ENCODE measurements at regions of chr10 and their contacts with region 1.

Region 1: GRCh38 chr10:7687228-7687907 is 15.7 kb upstream of the ITIH2 start:
- DNase-seq: peak; percentile 57 to 90 (median 66)
- ATAC-seq: peak; percentile 99
- H3K4me3 ChIP-seq: no peak overlapping the region
- H3K4me3 Mint-ChIP-seq: no peak overlapping the region
- H3K27ac ChIP-seq: no peak overlapping the region
- H3K27ac Mint-ChIP-seq: no peak overlapping the region
- H3K4me1 ChIP-seq: no peaks in the 10 kb centered on the region
- H3K4me1 Mint-ChIP-seq: peaks cover 5% of the 10 kb centered on the region
- H3K27me3 ChIP-seq: no peaks in the 10 kb centered on the region
- H3K27me3 Mint-ChIP-seq: peaks cover 7% of the 10 kb centered on the region
- CTCF ChIP-seq: peak; percentile 89

Region 2: GRCh38 chr10:6416892-6417512 is 1270.4 kb before region 1 on chr10:
- CTCF ChIA-PET with region 1: interaction called, 3 read pairs
- POLR2A ChIA-PET with region 1: no interaction called
- intact Hi-C with region 1: loop called in 1 of 2 experiments (anchors 2 kb)
- DNase-seq: peak in 4 of 14 experiments; percentile 22 to 76 (median 74)
- ATAC-seq: peak; percentile 76
- H3K4me3 ChIP-seq: no peak overlapping the region
- H3K4me3 Mint-ChIP-seq: no peak overlapping the region
- H3K27ac ChIP-seq: no peak overlapping the region
- H3K27ac Mint-ChIP-seq: no peak overlapping the region
- H3K4me1 ChIP-seq: no peaks in the 10 kb centered on the region
- H3K4me1 Mint-ChIP-seq: peaks cover 5% of the 10 kb centered on the region
- H3K27me3 ChIP-seq: no peaks in the 10 kb centered on the region
- H3K27me3 Mint-ChIP-seq: no peaks in the 10 kb centered on the region
- CTCF ChIP-seq: peak; percentile 86

Region 3: GRCh38 chr10:6920072-6921019 is 767.0 kb before region 1 on chr10:
- CTCF ChIA-PET with region 1: interaction called, 3 read pairs
- POLR2A ChIA-PET with region 1: no interaction called
- intact Hi-C with region 1: loop called (anchors 1 to 2 kb)
- DNase-seq: peak; percentile 61 to 87 (median 68)
- ATAC-seq: peak; percentile 100
- H3K4me3 ChIP-seq: no peak overlapping the region
- H3K4me3 Mint-ChIP-seq: no peak overlapping the region
- H3K27ac ChIP-seq: no peak overlapping the region
- H3K27ac Mint-ChIP-seq: no peak overlapping the region
- H3K4me1 ChIP-seq: peaks cover 8% of the 10 kb centered on the region
- H3K4me1 Mint-ChIP-seq: peaks cover 9% of the 10 kb centered on the region
- H3K27me3 ChIP-seq: no peaks in the 10 kb centered on the region
- H3K27me3 Mint-ChIP-seq: peaks cover 6% of the 10 kb centered on the region
- CTCF ChIP-seq: peak; percentile 70

Region 4: DNA sequence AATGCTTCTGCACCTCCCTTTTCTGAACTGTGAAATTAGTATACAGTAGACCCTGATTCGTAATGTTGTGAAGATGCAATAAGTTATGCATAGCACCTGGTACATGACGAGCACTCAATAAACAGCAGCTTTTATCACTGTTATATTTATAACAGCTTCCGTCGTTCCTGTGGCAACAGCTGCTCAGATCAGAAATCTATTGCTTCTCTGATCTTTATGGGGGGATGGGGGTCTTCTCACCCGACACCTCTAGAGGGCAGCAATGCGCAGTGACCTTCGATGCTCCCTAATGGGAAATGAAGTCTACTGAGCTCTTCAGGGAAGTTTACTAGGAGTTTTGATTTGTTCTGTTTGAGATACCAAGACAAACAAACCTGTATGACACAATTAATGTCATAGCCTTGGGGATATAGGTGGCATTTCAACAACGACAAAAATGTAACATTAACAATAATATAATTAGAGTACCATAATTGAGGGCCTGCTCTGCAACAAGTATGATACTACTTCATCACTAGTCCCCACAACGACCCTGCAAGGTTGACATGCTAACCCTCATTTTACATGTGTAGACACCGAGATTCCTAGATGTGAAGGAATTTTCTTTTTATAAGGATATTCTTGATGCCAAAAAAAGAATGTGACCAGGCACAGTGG is 566.1 kb before region 1 on chr10:
- CTCF ChIA-PET with region 1: no interaction called
- POLR2A ChIA-PET with region 1: no interaction called
- intact Hi-C with region 1: loop called in 1 of 2 experiments (anchors 10 kb)
- DNase-seq: peak; percentile 48 to 84 (median 61)
- ATAC-seq: peak; percentile 94
- H3K4me3 ChIP-seq: no peak overlapping the region
- H3K4me3 Mint-ChIP-seq: no peak overlapping the region
- H3K27ac ChIP-seq: no peak overlapping the region
- H3K27ac Mint-ChIP-seq: peak overlapping the region; percentile 65
- H3K4me1 ChIP-seq: peaks cover 7% of the 10 kb centered on the region
- H3K4me1 Mint-ChIP-seq: peaks cover 8% of the 10 kb centered on the region
- H3K27me3 ChIP-seq: no peaks in the 10 kb centered on the region
- H3K27me3 Mint-ChIP-seq: no peaks in the 10 kb centered on the region
- CTCF ChIP-seq: peak; percentile 82

Region 5: GRCh38 chr10:7260412-7260900 is 426.9 kb before region 1 on chr10:
- CTCF ChIA-PET with region 1: no interaction called
- POLR2A ChIA-PET with region 1: no interaction called
- intact Hi-C with region 1: loop called in 1 of 2 experiments (anchors 10 kb)
- DNase-seq: peak in 4 of 14 experiments; percentile 25 to 75 (median 68)
- ATAC-seq: peak; percentile 27
- H3K4me3 ChIP-seq: no peak overlapping the region
- H3K4me3 Mint-ChIP-seq: peak overlapping the region; percentile 30
- H3K27ac ChIP-seq: no peak overlapping the region
- H3K27ac Mint-ChIP-seq: peak overlapping the region; percentile 85
- H3K4me1 ChIP-seq: peaks cover 42% of the 10 kb centered on the region
- H3K4me1 Mint-ChIP-seq: peaks cover 59% of the 10 kb centered on the region
- H3K27me3 ChIP-seq: no peaks in the 10 kb centered on the region
- H3K27me3 Mint-ChIP-seq: no peaks in the 10 kb centered on the region
- CTCF ChIP-seq: peak; percentile 65

Region 6: DNA sequence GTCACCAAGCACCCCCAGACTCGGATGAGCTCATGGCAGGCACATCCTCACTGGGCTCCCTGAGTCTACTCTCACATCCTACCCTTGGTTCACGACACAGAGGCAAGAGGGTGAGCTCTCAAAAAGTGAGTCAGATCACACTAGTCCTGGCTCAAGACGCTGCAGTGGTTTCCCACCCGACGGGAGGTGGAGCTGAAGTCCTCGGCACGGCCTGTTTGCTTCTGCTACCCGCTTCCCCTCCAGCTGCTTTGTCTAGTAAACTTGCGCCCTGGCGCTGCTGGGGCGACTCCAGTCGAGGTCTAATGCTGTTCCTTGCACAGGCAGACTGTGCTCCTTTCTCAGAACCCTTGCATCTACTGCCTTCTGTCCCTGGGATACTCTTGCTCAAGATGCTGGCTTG is 263.1 kb before region 1 on chr10:
- CTCF ChIA-PET with region 1: interaction called, 4 read pairs
- POLR2A ChIA-PET with region 1: interaction called, 3 read pairs
- intact Hi-C with region 1: loop called (anchors 5 to 10 kb)
- DNase-seq: peak in 9 of 14 experiments; percentile 9 to 53 (median 24)
- ATAC-seq: peak; percentile 43
- H3K4me3 ChIP-seq: no peak overlapping the region
- H3K4me3 Mint-ChIP-seq: no peak overlapping the region
- H3K27ac ChIP-seq: no peak overlapping the region
- H3K27ac Mint-ChIP-seq: no peak overlapping the region
- H3K4me1 ChIP-seq: peaks cover 5% of the 10 kb centered on the region
- H3K4me1 Mint-ChIP-seq: peaks cover 22% of the 10 kb centered on the region
- H3K27me3 ChIP-seq: no peaks in the 10 kb centered on the region
- H3K27me3 Mint-ChIP-seq: no peaks in the 10 kb centered on the region
- CTCF ChIP-seq: no peak

Region 7: DNA sequence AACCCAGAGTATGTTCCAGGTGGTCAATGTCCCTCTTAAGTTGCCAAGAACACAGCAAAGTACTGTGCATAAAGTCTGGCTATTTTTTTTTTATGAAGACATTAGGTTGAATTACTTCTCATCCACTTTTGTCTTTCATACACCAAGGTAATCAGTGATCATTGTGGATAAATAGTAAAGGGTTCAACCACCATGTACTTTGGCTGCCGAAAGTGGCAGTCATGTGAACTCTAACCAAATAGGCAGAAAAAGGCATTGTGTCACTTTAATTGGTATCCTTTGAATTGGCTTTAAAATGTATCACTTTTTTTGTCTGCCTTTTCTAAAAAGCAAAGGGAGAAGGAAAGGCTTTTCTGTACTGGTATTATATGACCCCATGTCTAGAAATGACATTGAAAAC is 23.1 kb after region 1 on chr10:
- CTCF ChIA-PET with region 1: no interaction called
- POLR2A ChIA-PET with region 1: no interaction called
- intact Hi-C with region 1: no loop called
- DNase-seq: no peak
- ATAC-seq: no peak
- H3K4me3 ChIP-seq: no peak overlapping the region
- H3K4me3 Mint-ChIP-seq: no peak overlapping the region
- H3K27ac ChIP-seq: no peak overlapping the region
- H3K27ac Mint-ChIP-seq: no peak overlapping the region
- H3K4me1 ChIP-seq: no peaks in the 10 kb centered on the region
- H3K4me1 Mint-ChIP-seq: no peaks in the 10 kb centered on the region
- H3K27me3 ChIP-seq: peaks cover 2 to 6% of the 10 kb centered on the region in 2 experiments
- H3K27me3 Mint-ChIP-seq: peaks cover 28% of the 10 kb centered on the region
- CTCF ChIP-seq: no peak

Region 8: DNA sequence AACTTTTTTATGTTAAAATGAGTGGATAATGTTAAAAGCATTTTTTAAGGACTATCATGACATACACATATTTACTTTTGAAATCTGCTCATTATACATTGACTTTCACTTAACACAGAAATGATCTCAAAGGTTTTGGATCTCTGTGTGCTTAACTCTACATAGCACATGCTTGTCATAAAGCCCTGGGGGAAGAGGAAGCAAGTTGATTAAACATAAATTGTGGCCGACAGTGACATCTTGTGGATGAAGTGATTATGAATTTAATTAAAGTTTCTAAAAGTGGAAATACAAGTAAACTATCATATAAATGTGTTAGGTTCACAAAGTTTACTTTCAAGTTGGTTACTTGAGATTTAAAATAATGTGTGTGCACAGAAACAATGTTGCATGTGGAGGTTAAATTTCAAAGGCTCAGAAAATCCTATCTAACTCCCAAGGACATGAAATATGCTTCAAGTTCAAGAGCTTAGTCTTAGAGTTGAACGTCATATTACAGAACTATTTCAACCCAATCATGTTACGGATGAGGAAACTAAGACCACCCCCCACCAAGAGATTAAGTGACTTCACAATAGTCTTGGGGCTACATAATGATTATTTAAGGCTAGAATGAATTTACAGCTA is 1614.9 kb after region 1 on chr10:
- CTCF ChIA-PET with region 1: no interaction called
- POLR2A ChIA-PET with region 1: no interaction called
- intact Hi-C with region 1: loop called in 1 of 2 experiments (anchors 5 kb)
- DNase-seq: peak in 4 of 14 experiments; percentile 25 to 70 (median 64)
- ATAC-seq: peak; percentile 49
- H3K4me3 ChIP-seq: no peak overlapping the region
- H3K4me3 Mint-ChIP-seq: no peak overlapping the region
- H3K27ac ChIP-seq: no peak overlapping the region
- H3K27ac Mint-ChIP-seq: no peak overlapping the region
- H3K4me1 ChIP-seq: no peaks in the 10 kb centered on the region
- H3K4me1 Mint-ChIP-seq: no peaks in the 10 kb centered on the region
- H3K27me3 ChIP-seq: no peaks in the 10 kb centered on the region
- H3K27me3 Mint-ChIP-seq: peaks cover 19% of the 10 kb centered on the region
- CTCF ChIP-seq: peak; percentile 64